Activated CD4-positive, alpha-beta memory T cell treated with anti-CD3 and anti-CD28 coated beads for 36 hours (primary cell): ENCODE measurements at regions of chr6 and their contacts with region 1.

Region 1: GRCh38 chr6:118602300-118602699 is 49.1 kb downstream of the CEP85L start:
- DNase-seq: no peak
- H3K4me3 Mint-ChIP-seq: no peak overlapping the region
- H3K27ac Mint-ChIP-seq: no peak overlapping the region
- H3K4me1 Mint-ChIP-seq: peaks cover 32% of the 10 kb centered on the region
- H3K27me3 Mint-ChIP-seq: no peaks in the 10 kb centered on the region

Region 2: GRCh38 chr6:118580585-118581419 is 21.5 kb before region 1 on chr6:
- CTCF ChIA-PET with region 1: interaction called, 18 read pairs
- POLR2A ChIA-PET with region 1: no interaction called
- intact Hi-C with region 1: no loop called
- DNase-seq: no peak
- H3K4me3 Mint-ChIP-seq: no peak overlapping the region
- H3K27ac Mint-ChIP-seq: peak overlapping the region; percentile 64
- H3K4me1 Mint-ChIP-seq: peaks cover 6% of the 10 kb centered on the region
- H3K27me3 Mint-ChIP-seq: no peaks in the 10 kb centered on the region

Region 3: GRCh38 chr6:118625833-118626232 is 23.5 kb after region 1 on chr6:
- CTCF ChIA-PET with region 1: no interaction called
- POLR2A ChIA-PET with region 1: no interaction called
- intact Hi-C with region 1: no loop called
- DNase-seq: no peak
- H3K4me3 Mint-ChIP-seq: no peak overlapping the region
- H3K27ac Mint-ChIP-seq: no peak overlapping the region
- H3K4me1 Mint-ChIP-seq: peaks cover 51% of the 10 kb centered on the region
- H3K27me3 Mint-ChIP-seq: no peaks in the 10 kb centered on the region

Region 4: DNA sequence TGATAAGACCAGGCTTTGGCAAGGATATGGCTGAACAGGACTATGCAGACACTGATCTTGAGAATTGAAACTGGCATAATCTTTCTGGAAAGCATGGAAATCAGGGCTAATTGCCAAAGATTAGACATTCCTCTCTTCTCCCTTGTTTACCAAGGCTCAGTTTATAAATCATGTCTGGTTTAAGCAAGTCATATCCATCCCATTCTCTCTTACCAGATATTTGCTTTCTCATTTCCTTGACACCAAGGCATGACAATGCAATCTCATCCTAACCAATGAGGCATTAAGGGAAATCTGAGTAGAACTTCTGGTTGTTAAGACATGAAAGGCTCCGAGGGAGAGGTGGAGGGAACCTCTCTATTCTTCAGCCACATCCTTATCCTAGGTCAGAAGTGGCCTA is 159.3 kb after region 1 on chr6:
- CTCF ChIA-PET with region 1: no interaction called
- POLR2A ChIA-PET with region 1: no interaction called
- intact Hi-C with region 1: no loop called
- DNase-seq: no peak
- H3K4me3 Mint-ChIP-seq: no peak overlapping the region
- H3K27ac Mint-ChIP-seq: no peak overlapping the region
- H3K4me1 Mint-ChIP-seq: peaks cover 12% of the 10 kb centered on the region
- H3K27me3 Mint-ChIP-seq: no peaks in the 10 kb centered on the region